ENCODE measurements at regions of chr17 and their contacts with region 1.

Region 1: DNA sequence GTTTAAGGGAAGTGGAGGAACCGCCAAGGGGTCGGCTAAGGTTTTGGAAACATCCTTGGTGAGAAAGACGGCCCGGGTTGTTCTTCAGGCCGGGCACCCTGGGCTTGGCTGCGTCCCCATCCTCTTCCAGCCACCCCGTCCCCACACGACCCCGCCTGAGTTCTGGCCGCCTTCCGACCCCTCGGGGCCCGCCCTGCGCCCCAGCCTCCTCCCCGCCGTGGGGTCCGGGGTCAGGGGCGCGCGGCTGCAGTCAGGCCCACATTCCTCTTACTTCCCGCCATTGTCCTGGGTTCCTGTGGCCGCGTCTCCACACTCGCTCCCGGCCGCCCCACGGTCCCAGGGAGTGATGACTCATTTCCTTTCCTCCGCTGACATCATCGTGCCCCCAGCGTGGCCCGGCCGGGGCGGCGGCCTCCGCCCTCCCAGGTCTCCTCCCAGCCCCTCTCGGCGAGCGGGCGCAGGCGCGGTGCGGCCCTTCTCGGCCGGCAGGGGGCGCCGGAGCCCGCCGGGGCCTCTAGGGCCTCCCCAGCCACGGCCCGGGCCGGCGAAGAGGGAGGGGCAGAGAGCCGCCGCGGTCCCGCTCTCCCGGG is 59.6 kb downstream of the WSB1 start:
- DNase-seq: no peak
- H3K4me3 ChIP-seq: peak overlapping the region; percentile 56 to 59
- H3K27ac ChIP-seq: peak overlapping the region; percentile 95
- H3K4me1 ChIP-seq: peaks cover 19% of the 10 kb centered on the region
- H3K27me3 ChIP-seq: no peaks in the 10 kb centered on the region
- CTCF ChIP-seq: peak; percentile 80 to 98 (median 95)
- POLR2A ChIP-seq: peak in 1 of 2 donors; percentile 95

Region 2: DNA sequence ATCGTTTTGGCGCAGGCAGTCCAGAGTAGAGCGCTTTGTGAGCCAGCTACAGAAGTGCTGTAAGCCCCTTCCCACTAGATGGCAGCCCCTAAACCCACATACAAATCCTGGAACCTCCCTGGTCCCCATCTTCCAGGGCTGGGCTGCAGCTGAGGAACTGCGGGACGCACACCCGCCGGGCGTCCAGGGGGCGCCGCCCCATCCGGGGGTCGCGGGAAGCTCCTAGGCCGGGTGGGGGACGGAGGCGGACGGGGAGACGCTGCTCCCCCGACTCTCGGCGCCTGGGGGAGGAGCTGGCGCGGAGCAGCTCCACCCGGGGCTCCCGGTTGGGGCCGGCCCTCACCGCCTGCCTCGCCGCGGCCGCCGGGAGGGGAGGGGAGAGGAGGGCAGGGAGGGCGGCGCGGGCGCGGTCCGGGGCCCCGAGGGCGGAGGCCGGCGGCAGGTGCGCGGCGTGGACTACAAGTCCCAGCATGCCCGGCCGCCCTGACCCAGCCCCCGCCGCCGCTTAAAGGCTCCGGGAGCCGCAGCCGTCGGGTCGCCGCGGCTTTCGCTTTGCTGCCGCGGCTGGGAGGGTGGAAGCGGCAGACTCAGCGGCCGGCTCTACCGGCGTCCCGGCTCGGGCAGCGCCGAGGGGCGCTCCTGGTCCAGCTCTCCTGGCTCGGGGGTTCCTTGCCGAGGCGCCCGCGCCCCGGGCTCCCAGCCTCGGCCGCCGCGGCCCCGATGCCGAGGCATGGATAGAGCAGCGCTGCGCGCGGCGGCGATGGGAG is 102.5 kb after region 1 on chr17 and contains the start of gene KSR1:
- intact Hi-C with region 1: loop called (anchors 10 kb)
- DNase-seq: no peak
- H3K4me3 ChIP-seq: peak within 1 kb of the TSS; percentile 74 to 84
- H3K27ac ChIP-seq: peak within 1 kb of the TSS; percentile 88
- H3K4me1 ChIP-seq: peaks cover 53% of the 10 kb centered on the region
- H3K27me3 ChIP-seq: no peaks in the 10 kb centered on the region
- CTCF ChIP-seq: peak in 2 of 3 experiments; percentile 18 to 20
- POLR2A ChIP-seq: peak in 1 of 2 donors; percentile 89
- total RNA-seq, gene KSR1: 40.3 TPM

Region 3: DNA sequence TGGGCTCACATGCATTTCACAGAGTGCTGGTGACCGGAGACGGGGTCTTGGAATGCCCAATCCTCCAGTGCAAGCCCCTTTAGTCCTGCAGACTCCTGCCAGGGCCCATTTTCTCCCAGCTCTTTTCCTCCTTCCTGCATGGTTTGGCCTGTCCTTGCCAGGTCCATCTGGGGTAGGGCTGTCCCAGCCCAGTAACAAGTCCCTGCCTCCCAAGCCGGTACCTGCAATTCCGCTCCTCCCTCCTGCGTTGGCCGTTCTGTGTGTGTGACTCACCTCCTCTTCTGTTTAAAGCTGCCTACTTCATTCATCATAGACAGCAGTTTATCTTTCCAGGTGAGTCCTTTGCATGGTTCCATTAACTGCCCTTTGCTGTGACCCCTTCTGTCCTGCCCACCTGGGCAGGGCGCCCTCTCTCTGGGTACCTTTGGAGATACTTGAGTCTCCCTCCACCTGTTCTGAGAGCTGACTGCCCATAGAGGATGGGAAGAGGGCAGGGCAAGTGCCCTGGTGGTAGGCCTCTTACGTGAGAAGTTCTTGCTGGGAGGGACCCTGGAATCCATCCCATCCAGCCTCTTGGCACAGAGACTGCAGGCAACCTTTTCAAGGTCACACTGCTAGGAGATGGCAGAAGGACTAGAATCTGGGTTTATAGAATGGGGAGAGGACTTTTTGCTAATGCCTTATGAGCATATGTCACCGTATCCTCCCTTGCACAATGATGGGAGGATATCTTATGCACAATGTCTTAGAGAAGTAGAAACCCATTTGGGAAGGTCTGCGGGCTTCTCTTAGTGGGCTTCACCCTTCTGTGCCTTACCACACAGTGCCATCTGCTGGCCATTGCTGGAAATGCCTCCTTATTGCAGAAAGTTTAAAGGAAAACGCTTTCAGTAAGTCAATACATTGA is 247.8 kb after region 1 on chr17:
- intact Hi-C with region 1: loop called (anchors 5 kb)
- DNase-seq: no peak
- H3K4me3 ChIP-seq: no peak overlapping the region
- H3K27ac ChIP-seq: no peak overlapping the region
- H3K4me1 ChIP-seq: no peaks in the 10 kb centered on the region
- H3K27me3 ChIP-seq: no peaks in the 10 kb centered on the region
- CTCF ChIP-seq: peak; percentile 76 to 97 (median 87)
- POLR2A ChIP-seq: no peak

Measured in vagina (tissue), 2 donors.